ENCODE measurements at regions of chr2 and their contacts with region 1.

Region 1: GRCh38 chr2:97663965-97664635 is at the start of gene ACTR1B:
- DNase-seq: peak; percentile 93
- ATAC-seq: peak; percentile 89
- H3K4me3 Mint-ChIP-seq: peak within 1 kb of the TSS; percentile 92
- H3K27ac Mint-ChIP-seq: peak within 1 kb of the TSS; percentile 91
- H3K4me1 Mint-ChIP-seq: peaks cover 28% of the 10 kb centered on the region
- H3K27me3 Mint-ChIP-seq: no peaks in the 10 kb centered on the region
- CTCF ChIP-seq: no peak
- total RNA-seq, gene ACTR1B: 55.0 and 55.9 TPM in 2 replicates

Region 2: DNA sequence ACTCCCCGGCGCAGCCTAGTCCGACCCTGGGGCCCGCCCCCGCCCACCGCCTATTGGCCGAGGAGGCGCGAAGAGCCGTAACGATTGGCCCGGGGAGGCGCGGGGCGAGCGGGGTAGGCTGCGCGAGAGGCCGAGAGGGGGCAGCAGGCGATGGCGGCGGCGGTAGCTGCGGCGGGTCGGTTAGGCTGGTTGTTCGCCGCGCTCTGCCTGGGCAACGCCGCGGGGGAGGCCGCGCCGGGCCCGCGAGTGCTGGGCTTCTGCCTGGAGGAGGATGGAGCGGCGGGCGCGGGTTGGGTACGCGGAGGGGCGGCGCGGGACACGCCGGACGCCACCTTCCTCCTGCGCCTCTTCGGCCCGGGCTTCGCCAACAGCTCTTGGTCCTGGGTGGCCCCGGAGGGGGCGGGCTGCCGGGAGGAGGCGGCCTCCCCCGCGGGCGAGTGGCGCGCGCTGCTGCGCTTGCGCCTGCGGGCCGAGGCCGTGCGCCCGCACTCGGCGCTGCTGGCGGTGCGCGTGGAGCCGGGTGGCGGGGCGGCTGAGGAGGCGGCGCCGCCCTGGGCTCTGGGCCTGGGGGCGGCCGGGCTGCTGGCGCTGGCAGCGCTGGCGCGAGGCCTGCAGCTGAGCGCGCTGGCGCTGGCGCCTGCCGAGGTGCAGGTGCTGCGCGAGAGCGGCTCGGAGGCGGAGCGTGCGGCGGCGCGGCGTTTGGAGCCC is 847.8 kb before region 1 on chr2 and contains the start of gene CNNM3:
- CTCF ChIA-PET with region 1: no interaction called
- POLR2A ChIA-PET with region 1: no interaction called
- intact Hi-C with region 1: loop called (anchors 5 kb)
- DNase-seq: peak; percentile 97
- ATAC-seq: peak; percentile 93
- H3K4me3 Mint-ChIP-seq: peak within 1 kb of the TSS; percentile 88
- H3K27ac Mint-ChIP-seq: peak within 1 kb of the TSS; percentile 83
- H3K4me1 Mint-ChIP-seq: peaks cover 56% of the 10 kb centered on the region
- H3K27me3 Mint-ChIP-seq: no peaks in the 10 kb centered on the region
- CTCF ChIP-seq: no peak
- total RNA-seq, gene CNNM3: 19.0 and 20.3 TPM in 2 replicates

Region 3: GRCh38 chr2:97697252-97698235 is 33.4 kb after region 1 on chr2:
- CTCF ChIA-PET with region 1: interaction called, 15 read pairs
- POLR2A ChIA-PET with region 1: interaction called, 4 read pairs
- intact Hi-C with region 1: loop called (anchors 1 kb)
- DNase-seq: peak; percentile 80
- ATAC-seq: peak; percentile 86
- H3K4me3 Mint-ChIP-seq: peak overlapping the region; percentile 4
- H3K27ac Mint-ChIP-seq: peak overlapping the region; percentile 30
- H3K4me1 Mint-ChIP-seq: peaks cover 6% of the 10 kb centered on the region
- H3K27me3 Mint-ChIP-seq: peaks cover 2% of the 10 kb centered on the region
- CTCF ChIP-seq: peak; percentile 50

Region 4: DNA sequence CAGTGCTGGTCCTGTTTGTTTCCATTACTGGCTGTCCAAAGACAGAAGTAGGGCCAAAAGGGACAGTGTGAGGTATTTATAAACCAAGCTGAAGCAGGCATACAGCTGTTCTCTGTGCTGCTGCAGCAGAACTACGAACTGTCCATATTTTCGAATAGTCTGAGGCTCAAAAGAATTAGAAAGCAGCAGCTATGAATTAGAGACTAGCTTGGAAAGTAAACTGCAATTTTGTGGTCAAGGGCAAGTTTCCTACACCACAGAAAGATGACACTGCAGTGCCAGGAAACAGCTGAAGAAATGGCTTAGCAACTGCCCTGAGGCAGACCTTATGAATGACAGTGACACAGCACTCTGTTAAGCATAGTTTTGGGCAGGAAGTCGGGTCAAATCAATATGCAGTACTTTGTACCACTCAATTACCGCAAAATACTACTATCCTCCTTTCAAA is 206.3 kb after region 1 on chr2:
- CTCF ChIA-PET with region 1: no interaction called
- POLR2A ChIA-PET with region 1: no interaction called
- intact Hi-C with region 1: no loop called
- DNase-seq: no peak
- ATAC-seq: peak; percentile 93
- H3K4me3 Mint-ChIP-seq: no peak overlapping the region
- H3K27ac Mint-ChIP-seq: peak overlapping the region; percentile 30
- H3K4me1 Mint-ChIP-seq: peaks cover 54% of the 10 kb centered on the region
- H3K27me3 Mint-ChIP-seq: no peaks in the 10 kb centered on the region
- CTCF ChIP-seq: no peak

Region 5: DNA sequence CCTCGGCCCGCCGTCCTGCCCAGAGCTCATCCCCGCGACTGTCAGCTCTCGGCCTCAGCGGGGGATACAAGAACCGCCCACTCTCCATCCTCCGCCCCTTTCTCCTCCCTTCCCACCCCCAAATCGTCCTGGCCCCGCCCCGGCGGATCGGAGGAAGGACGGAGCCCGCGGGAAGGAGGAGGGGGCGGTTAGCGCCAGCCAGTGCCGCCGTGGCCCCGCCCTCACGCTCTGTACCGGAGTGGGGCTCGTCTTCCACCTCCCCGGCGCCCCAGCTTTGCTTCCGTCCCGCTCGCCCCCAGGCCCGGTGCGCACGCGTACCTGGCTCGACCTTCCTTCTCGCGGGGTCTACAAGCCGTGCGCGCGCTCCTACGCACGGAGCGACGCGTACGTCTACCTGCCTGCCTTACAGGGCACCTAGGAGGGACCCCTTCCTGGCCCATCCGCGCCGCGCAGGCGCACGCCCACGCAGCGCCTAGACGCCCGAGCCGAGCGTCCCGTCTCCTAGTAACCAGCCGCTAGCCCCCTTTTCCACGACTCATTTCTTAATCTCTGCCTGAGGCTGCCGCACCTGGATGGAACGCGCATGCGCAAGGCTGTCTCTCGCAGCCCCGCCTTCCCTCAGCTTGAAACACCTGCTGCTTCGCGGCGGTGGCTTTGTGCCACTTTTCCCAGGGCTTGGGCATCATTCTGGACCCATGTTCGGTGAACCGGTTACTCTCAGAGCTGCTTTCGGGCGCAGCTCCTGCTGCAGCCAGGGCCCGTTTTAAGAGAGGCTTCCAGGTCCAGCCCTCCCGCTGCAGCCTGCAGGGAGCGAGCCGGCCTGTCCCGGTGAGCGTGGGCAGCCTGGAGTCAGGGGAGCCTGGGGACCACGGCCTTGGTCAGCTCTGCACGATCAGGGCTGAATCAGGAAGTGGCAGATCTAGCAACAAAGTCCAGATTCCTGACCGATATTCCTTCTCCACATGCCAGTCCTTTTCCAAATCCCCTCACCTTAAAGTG is 1477.3 kb after region 1 on chr2 and contains the start of gene C2orf15:
- CTCF ChIA-PET with region 1: no interaction called
- POLR2A ChIA-PET with region 1: interaction called, 3 read pairs
- intact Hi-C with region 1: loop called (anchors 5 kb)
- DNase-seq: peak; percentile 96
- ATAC-seq: peak; percentile 88
- H3K4me3 Mint-ChIP-seq: peak within 1 kb of the TSS; percentile 97
- H3K27ac Mint-ChIP-seq: peak within 1 kb of the TSS; percentile 96
- H3K4me1 Mint-ChIP-seq: peaks cover 26% of the 10 kb centered on the region
- H3K27me3 Mint-ChIP-seq: no peaks in the 10 kb centered on the region
- CTCF ChIP-seq: no peak
- total RNA-seq, gene C2orf15: 0.69 and 1.2 TPM in 2 replicates